ENCODE measurements at regions of chr1 and their contacts with region 1.

Region 1: DNA sequence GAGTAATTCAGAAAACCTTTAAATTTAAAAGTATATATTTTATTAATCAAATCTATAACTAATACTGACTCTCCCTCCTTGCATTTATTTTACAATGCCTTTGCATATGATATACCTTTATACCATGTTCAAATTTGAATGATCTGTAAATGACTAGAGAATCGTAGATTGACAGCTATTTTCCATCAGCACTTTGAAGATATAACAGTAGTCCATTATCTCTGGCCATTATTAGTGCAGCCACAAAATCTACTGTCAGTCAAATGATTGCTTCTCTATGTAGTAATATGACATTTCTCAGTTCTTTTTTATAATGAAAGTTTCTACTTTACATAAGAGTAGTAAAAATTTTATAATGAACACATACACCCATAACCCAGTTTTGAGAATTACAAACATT is 1054.8 kb upstream of the B3GALT2 start:
- DNase-seq: no peak
- H3K4me3 ChIP-seq: no peak overlapping the region
- H3K4me3 Mint-ChIP-seq: no peak overlapping the region
- H3K27ac ChIP-seq: no peak overlapping the region
- H3K27ac Mint-ChIP-seq: no peak overlapping the region
- H3K4me1 ChIP-seq: no peaks in the 10 kb centered on the region
- H3K4me1 Mint-ChIP-seq: peaks cover 3 to 11% (median 6%) of the 10 kb centered on the region in 4 donors
- H3K27me3 ChIP-seq: no peaks in the 10 kb centered on the region
- H3K27me3 Mint-ChIP-seq: no peaks in the 10 kb centered on the region

Region 2: GRCh38 chr1:194167956-194168640 is 73.1 kb before region 1 on chr1:
- CTCF ChIA-PET with region 1: no interaction called
- POLR2A ChIA-PET with region 1: no interaction called
- intact Hi-C with region 1: no loop called
- DNase-seq: no peak
- H3K4me3 ChIP-seq: no peak overlapping the region
- H3K4me3 Mint-ChIP-seq: no peak overlapping the region
- H3K27ac ChIP-seq: no peak overlapping the region
- H3K27ac Mint-ChIP-seq: no peak overlapping the region
- H3K4me1 ChIP-seq: no peaks in the 10 kb centered on the region
- H3K4me1 Mint-ChIP-seq: no peaks in the 10 kb centered on the region
- H3K27me3 ChIP-seq: no peaks in the 10 kb centered on the region
- H3K27me3 Mint-ChIP-seq: no peaks in the 10 kb centered on the region

Region 3: GRCh38 chr1:194279975-194280374 is 38.8 kb after region 1 on chr1:
- CTCF ChIA-PET with region 1: no interaction called
- POLR2A ChIA-PET with region 1: no interaction called
- intact Hi-C with region 1: loop called (anchors 5 kb)
- DNase-seq: no peak
- H3K4me3 ChIP-seq: no peak overlapping the region
- H3K4me3 Mint-ChIP-seq: no peak overlapping the region
- H3K27ac ChIP-seq: no peak overlapping the region
- H3K27ac Mint-ChIP-seq: peak overlapping the region in 1 of 7 donors; percentile 41
- H3K4me1 ChIP-seq: no peaks in the 10 kb centered on the region
- H3K4me1 Mint-ChIP-seq: peaks cover 4 to 19% (median 11%) of the 10 kb centered on the region in 4 donors
- H3K27me3 ChIP-seq: no peaks in the 10 kb centered on the region
- H3K27me3 Mint-ChIP-seq: no peaks in the 10 kb centered on the region

Measured in CD4-positive, alpha-beta memory T cell (primary cell).